IMR-90 (cell line): ENCODE measurements at regions of chr12 and their contacts with region 1.

Region 1: GRCh38 chr12:49397000-49397399 is 29.7 kb downstream of the SPATS2 start:
- DNase-seq: no peak
- ATAC-seq: no peak
- H3K4me3 ChIP-seq: no peak overlapping the region
- H3K27ac ChIP-seq: no peak overlapping the region
- H3K4me1 ChIP-seq: peaks cover 3% of the 10 kb centered on the region; the same call in 1 of the 2 replicates
- H3K27me3 ChIP-seq: no peaks in the 10 kb centered on the region
- CTCF ChIP-seq: no peak
- POLR2A ChIP-seq: no peak
- RAD21 ChIP-seq: no peak

Region 2: DNA sequence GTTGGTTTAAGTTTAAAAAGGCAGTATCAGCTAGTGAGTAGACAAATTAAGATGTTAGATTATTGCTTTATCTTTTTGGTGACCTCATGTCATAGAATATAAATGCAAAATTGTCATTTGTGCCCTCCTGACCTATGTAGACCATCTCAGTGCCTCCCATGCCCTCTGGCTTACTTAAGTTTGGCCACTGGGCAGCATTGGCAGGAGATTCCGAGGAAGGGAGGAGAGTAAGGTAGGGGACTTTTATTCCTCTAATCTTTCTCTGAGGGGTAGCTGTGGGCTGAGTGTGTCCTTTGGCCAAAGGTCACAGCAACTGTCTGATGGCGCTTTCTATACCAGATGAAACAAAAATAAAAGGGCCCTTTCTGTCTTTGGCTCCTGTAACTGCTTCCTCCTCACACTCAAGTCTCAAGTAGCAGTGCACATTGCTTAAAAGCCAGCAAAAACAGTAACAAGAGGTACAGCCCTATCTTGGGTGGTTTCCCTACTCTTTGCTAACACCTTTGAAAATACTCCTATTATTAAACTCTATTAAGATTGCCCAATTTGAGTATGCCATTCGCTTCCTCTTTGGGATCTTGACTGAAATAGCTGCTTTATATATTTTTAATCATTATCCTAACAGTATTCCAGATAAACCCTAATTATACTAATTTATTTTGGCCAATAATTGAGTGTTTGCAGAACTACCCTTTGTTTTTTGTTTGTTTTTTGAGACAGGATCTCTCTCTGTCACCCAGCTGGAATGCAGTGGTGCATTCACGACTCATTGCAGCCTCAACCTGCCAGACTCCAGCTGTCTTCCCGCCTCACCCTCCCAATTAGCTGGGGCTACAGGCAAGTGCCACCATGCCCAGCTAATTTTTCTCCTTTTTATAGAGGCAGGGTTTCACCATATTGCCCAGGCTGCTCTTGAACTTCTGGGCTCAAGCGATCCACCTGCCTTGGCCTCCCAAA is 85.4 kb after region 1 on chr12:
- CTCF ChIA-PET with region 1: no interaction called
- POLR2A ChIA-PET with region 1: no interaction called
- dilution Hi-C with region 1: no loop called
- in situ Hi-C with region 1: no loop called
- intact Hi-C with region 1: loop called (anchors 10 kb)
- DNase-seq: peak; percentile 39
- ATAC-seq: peak; percentile 49
- H3K4me3 ChIP-seq: no peak overlapping the region
- H3K27ac ChIP-seq: no peak overlapping the region
- H3K4me1 ChIP-seq: peaks cover 6% of the 10 kb centered on the region
- H3K27me3 ChIP-seq: no peaks in the 10 kb centered on the region
- CTCF ChIP-seq: no peak
- POLR2A ChIP-seq: no peak
- RAD21 ChIP-seq: no peak